ENCODE measurements at regions of chr1 and their contacts with region 1.

Region 1: DNA sequence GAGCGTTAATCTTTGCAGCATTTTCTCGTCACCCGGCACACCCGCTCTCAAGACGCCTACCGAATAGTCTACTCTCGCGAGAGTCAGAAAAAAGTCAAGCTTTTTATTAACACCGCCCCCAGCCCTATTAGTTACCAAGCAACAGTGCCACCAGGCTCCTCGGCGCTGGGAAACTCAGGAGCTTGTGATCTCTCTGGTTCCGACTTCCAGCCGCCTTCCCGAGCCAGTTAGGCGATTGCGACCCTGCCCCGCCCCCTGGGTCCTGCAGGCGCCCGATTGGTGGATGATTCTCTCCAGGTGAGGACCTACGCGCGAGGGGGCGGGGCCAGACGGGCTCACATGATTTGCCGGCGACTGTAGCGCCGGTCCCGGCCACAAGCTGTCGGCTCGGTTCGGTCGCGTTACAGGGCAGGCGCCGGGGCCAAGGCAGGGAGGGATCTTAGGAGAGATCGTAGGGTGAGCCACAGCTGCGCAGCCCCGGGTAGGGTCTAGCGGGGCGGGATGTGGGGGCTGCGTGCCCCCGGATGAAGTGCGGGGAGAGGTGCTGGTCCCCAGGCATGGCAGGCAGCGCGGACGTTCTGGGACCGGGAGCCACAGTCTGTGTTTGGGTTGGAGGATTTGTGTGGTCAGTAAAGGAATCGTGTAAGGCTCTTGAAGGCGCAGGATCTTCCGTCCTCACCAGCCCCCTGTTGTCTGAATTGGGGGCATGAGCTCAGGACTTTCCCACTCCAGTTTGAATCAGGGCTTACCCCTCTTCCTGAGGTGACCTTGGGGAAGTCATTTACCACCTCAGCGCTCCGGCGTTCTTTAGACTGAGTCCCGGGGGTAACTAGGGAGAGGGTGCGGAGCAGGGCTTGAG is at the start of gene PFKFB2:
- DNase-seq: peak; percentile 100
- H3K4me3 Mint-ChIP-seq: peak within 1 kb of the TSS; percentile 89
- H3K27ac Mint-ChIP-seq: peak within 1 kb of the TSS; percentile 95
- H3K4me1 Mint-ChIP-seq: peaks cover 51% of the 10 kb centered on the region
- H3K27me3 Mint-ChIP-seq: no peaks in the 10 kb centered on the region
- CTCF ChIP-seq: peak; percentile 24
- total RNA-seq, gene PFKFB2: 21.1 and 22.0 TPM in 2 replicates

Region 2: GRCh38 chr1:206878456-206878855 is 174.7 kb before region 1 on chr1:
- CTCF ChIA-PET with region 1: no interaction called
- POLR2A ChIA-PET with region 1: no interaction called
- intact Hi-C with region 1: no loop called
- DNase-seq: no peak
- H3K4me3 Mint-ChIP-seq: no peak overlapping the region
- H3K27ac Mint-ChIP-seq: no peak overlapping the region
- H3K4me1 Mint-ChIP-seq: peaks cover 19% of the 10 kb centered on the region
- H3K27me3 Mint-ChIP-seq: no peaks in the 10 kb centered on the region
- CTCF ChIP-seq: no peak

Region 3: DNA sequence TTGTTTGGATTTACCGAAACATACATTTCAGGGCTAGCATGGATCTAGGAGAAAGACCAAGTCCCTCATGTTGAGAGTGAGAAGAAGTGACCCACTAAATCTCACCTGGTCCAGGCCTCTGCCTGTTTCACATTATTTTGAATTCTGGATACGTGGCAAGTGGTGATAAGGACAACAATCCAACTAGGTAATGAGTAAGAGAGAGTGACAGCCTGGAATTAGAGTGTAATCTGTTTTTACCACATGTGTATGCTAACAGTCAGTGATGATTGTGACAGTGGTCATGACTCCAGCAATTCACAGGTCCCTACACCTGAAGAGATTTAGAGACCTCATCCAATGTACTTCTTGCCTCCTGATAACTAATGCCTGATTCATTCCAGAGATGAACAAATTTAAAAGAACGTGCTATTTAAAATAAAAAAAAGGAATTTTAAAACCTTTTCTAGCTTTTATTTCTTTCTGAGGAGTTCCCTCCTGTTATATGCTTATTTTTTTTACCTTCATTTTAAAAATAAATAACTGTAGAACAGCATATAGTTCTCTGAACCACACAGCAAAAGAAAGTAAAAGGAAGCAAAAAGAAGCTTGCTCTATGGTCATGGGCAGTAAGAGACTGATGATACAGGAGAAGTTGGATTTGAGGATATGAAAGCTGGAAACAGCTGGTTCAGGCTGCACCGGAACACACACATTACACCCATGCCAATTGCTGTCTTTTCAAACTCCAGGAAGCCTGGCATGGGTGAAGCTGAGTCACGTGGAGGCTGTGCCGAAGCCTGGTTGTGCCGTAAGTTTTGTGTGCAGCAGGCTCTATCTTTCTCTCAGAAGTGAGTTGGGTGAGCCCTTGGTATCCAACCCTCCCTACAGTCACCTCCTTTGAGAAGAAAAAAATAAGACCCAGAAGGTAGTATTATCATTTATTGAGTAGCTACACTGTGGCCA is 35.3 kb before region 1 on chr1:
- CTCF ChIA-PET with region 1: interaction called, 22 read pairs
- POLR2A ChIA-PET with region 1: interaction called, 2,100 read pairs
- intact Hi-C with region 1: no loop called
- DNase-seq: peak; percentile 89
- H3K4me3 Mint-ChIP-seq: no peak overlapping the region
- H3K27ac Mint-ChIP-seq: peak overlapping the region; percentile 60
- H3K4me1 Mint-ChIP-seq: peaks cover 49% of the 10 kb centered on the region
- H3K27me3 Mint-ChIP-seq: no peaks in the 10 kb centered on the region
- CTCF ChIP-seq: no peak

Region 4: DNA sequence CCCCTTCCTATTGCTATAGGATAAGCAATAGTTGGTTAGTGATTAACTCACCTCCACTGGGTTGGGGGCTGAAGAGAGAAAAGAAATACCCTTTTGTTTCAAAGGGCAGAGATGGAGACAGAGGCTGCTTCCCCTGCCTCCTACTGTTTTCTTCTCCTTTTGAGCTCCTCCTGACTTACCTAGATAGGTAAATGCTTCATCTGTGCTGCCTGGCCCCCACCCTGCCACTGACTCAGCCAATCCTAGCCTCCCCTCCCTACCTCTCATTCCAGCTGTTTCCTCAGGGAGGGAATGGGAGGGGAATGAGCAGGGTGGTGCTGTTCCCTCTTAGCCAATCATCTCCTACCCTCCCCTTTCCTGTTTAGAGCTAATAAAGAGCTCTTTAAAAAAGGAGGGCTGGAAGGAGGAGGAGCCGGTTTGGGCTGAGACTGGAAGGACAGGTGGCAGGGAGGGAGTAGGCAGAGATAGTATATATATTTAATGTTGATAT is 20.6 kb before region 1 on chr1 and contains the start of gene C1orf116:
- CTCF ChIA-PET with region 1: interaction called, 168 read pairs
- POLR2A ChIA-PET with region 1: interaction called, 2,100 read pairs
- intact Hi-C with region 1: no loop called
- DNase-seq: peak; percentile 98
- H3K4me3 Mint-ChIP-seq: peak within 1 kb of the TSS; percentile 75
- H3K27ac Mint-ChIP-seq: peak within 1 kb of the TSS; percentile 86
- H3K4me1 Mint-ChIP-seq: peaks cover 79% of the 10 kb centered on the region
- H3K27me3 Mint-ChIP-seq: no peaks in the 10 kb centered on the region
- CTCF ChIP-seq: no peak
- total RNA-seq, gene C1orf116: 35.4 and 35.5 TPM in 2 replicates

Region 5: GRCh38 chr1:207064561-207064960 is 11.4 kb after region 1 on chr1:
- CTCF ChIA-PET with region 1: interaction called, 146 read pairs
- POLR2A ChIA-PET with region 1: interaction called, 399 read pairs
- intact Hi-C with region 1: no loop called
- DNase-seq: no peak
- H3K4me3 Mint-ChIP-seq: no peak overlapping the region
- H3K27ac Mint-ChIP-seq: no peak overlapping the region
- H3K4me1 Mint-ChIP-seq: no peaks in the 10 kb centered on the region
- H3K27me3 Mint-ChIP-seq: no peaks in the 10 kb centered on the region
- CTCF ChIP-seq: no peak